MCF 10A (cell line): ENCODE measurements at regions of chr2 and their contacts with region 1.

Region 1: GRCh38 chr2:61538200-61538919 is at the start of gene XPO1:
- DNase-seq: peak; percentile 100
- H3K4me3 Mint-ChIP-seq: peak within 1 kb of the TSS; percentile 88
- H3K27ac Mint-ChIP-seq: peak within 1 kb of the TSS; percentile 97
- H3K4me1 Mint-ChIP-seq: peaks cover 5% of the 10 kb centered on the region
- H3K27me3 Mint-ChIP-seq: no peaks in the 10 kb centered on the region
- CTCF ChIP-seq: no peak
- total RNA-seq, gene XPO1: 131 and 148 TPM in 2 replicates

Region 2: DNA sequence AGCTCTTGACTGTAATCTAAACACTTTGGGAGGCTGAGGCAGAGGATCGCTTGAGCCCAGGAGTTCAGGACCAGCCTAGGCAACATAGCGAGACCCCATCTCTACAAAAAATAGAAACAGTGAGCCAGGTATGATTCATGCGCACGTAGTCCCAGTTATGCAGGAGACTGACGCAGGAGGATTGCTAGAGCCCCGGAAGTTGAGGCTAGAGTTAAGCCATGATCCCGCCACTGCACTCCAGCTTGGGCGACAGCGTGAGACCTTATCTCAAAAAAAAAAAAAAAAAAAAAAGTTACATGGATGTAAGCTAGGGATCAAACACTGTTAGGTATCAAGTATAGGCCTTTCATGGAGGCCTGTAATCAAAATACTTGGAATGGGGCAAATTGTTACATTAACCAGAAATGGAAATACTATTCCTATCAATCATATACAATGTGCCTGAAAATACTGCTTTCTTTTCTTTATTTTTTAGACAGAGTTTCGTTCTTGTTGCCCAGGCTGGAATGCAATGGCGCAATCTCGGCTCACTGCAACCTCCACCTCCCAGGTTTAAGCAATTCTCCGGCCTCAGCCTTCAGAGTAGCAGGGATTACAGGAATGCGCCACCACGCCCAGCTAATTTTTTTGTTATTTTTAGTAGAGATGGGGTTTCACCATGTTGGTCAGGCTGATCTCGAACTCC is 27.5 kb before region 1 on chr2:
- CTCF ChIA-PET with region 1: interaction called, 5 read pairs
- POLR2A ChIA-PET with region 1: interaction called, 27 read pairs
- intact Hi-C with region 1: no loop called
- DNase-seq: peak; percentile 72
- H3K4me3 Mint-ChIP-seq: peak overlapping the region; percentile 31
- H3K27ac Mint-ChIP-seq: peak overlapping the region; percentile 81
- H3K4me1 Mint-ChIP-seq: no peaks in the 10 kb centered on the region
- H3K27me3 Mint-ChIP-seq: no peaks in the 10 kb centered on the region
- CTCF ChIP-seq: no peak

Region 3: GRCh38 chr2:61566566-61566965 is 28.2 kb after region 1 on chr2:
- CTCF ChIA-PET with region 1: interaction called, 3 read pairs
- POLR2A ChIA-PET with region 1: interaction called, 10 read pairs
- intact Hi-C with region 1: no loop called
- DNase-seq: no peak
- H3K4me3 Mint-ChIP-seq: no peak overlapping the region
- H3K27ac Mint-ChIP-seq: no peak overlapping the region
- H3K4me1 Mint-ChIP-seq: no peaks in the 10 kb centered on the region
- H3K27me3 Mint-ChIP-seq: no peaks in the 10 kb centered on the region
- CTCF ChIP-seq: no peak

Region 4: DNA sequence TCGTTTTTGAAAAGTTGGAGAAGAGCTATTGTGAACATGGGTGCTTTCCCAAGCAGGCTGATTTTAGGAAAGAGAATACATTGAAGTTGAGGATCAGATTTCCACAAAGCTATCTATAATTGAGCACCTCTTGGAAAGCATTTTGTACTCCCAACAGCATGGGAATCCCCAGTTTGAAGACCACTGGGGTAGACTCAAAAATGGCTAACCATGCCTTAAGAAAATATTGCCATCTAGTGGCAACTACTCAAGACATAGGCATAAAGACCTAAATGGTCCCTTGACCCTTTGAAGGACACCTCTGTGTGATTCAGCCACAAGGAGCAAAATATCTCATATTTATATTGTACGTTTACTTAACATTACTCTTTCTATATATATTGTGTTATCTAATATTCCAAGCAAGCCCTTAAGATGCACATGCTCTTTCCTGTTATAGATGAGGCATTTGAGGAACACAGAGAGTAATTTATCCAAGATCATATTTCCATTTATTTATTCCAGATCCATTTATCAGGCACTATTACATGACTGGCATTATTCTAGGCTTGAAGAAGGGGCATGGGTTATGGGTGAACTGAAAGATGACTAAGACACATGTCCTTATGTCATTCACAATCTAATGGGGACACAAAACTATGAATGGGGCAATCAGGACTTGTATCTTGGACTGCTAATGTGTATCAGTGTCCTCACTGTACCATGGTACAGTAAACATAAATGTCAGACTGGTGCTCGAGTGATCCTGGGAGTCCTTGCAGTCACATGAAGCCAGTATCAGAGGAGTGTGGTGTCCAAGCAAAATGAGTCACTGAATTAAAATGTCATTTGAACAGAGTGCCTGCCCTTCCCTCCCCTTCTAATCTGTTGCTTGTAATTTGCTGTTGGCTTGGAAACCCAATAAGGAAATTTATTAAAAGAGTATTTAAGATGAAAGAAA is 120.8 kb after region 1 on chr2:
- CTCF ChIA-PET with region 1: interaction called, 5 read pairs
- POLR2A ChIA-PET with region 1: interaction called, 19 read pairs
- intact Hi-C with region 1: loop called (anchors 5 kb)
- DNase-seq: peak; percentile 58
- H3K4me3 Mint-ChIP-seq: peak overlapping the region; percentile 28
- H3K27ac Mint-ChIP-seq: no peak overlapping the region
- H3K4me1 Mint-ChIP-seq: peaks cover 18% of the 10 kb centered on the region
- H3K27me3 Mint-ChIP-seq: no peaks in the 10 kb centered on the region
- CTCF ChIP-seq: peak; percentile 57

Region 5: GRCh38 chr2:61854474-61855182 is 316.3 kb after region 1 on chr2:
- CTCF ChIA-PET with region 1: no interaction called
- POLR2A ChIA-PET with region 1: interaction called, 33 read pairs
- intact Hi-C with region 1: no loop called
- DNase-seq: peak; percentile 98
- H3K4me3 Mint-ChIP-seq: peak overlapping the region; percentile 93
- H3K27ac Mint-ChIP-seq: peak overlapping the region; percentile 81
- H3K4me1 Mint-ChIP-seq: peaks cover 6% of the 10 kb centered on the region
- H3K27me3 Mint-ChIP-seq: no peaks in the 10 kb centered on the region
- CTCF ChIP-seq: no peak